ENCODE measurements at regions of chr15 and their contacts with region 1.

Region 1: GRCh38 chr15:90598031-90598577 is 68.4 kb downstream of the CRTC3 start:
- DNase-seq: peak; percentile 21 to 29
- ATAC-seq: peak; percentile 34 to 62 (median 58)
- H3K4me3 ChIP-seq: no peak overlapping the region
- H3K4me3 Mint-ChIP-seq: peak overlapping the region; percentile 77
- H3K27ac ChIP-seq: peak overlapping the region; percentile 82
- H3K27ac Mint-ChIP-seq: peak overlapping the region; percentile 93 to 97
- H3K4me1 ChIP-seq: peaks cover 42% of the 10 kb centered on the region
- H3K4me1 Mint-ChIP-seq: peaks cover 53 to 55% of the 10 kb centered on the region in 2 donors
- H3K27me3 ChIP-seq: no peaks in the 10 kb centered on the region
- H3K27me3 Mint-ChIP-seq: no peaks in the 10 kb centered on the region
- CTCF ChIP-seq: no peak

Region 2: GRCh38 chr15:90529371-90530249 is 68.5 kb before region 1 on chr15 and contains the start of gene CRTC3:
- intact Hi-C with region 1: loop called (anchors 5 kb)
- DNase-seq: peak; percentile 57 to 80
- ATAC-seq: peak; percentile 82 to 87 (median 82)
- H3K4me3 ChIP-seq: peak within 1 kb of the TSS; percentile 75
- H3K4me3 Mint-ChIP-seq: peak within 1 kb of the TSS; percentile 98
- H3K27ac ChIP-seq: peak within 1 kb of the TSS; percentile 75
- H3K27ac Mint-ChIP-seq: peak within 1 kb of the TSS; percentile 87 to 93
- H3K4me1 ChIP-seq: peaks cover 21% of the 10 kb centered on the region
- H3K4me1 Mint-ChIP-seq: peaks cover 41 to 46% of the 10 kb centered on the region in 2 donors
- H3K27me3 ChIP-seq: no peaks in the 10 kb centered on the region
- H3K27me3 Mint-ChIP-seq: no peaks in the 10 kb centered on the region
- CTCF ChIP-seq: no peak
- total RNA-seq, gene CRTC3: 68.8 to 101 (median 92.4) TPM

Region 3: DNA sequence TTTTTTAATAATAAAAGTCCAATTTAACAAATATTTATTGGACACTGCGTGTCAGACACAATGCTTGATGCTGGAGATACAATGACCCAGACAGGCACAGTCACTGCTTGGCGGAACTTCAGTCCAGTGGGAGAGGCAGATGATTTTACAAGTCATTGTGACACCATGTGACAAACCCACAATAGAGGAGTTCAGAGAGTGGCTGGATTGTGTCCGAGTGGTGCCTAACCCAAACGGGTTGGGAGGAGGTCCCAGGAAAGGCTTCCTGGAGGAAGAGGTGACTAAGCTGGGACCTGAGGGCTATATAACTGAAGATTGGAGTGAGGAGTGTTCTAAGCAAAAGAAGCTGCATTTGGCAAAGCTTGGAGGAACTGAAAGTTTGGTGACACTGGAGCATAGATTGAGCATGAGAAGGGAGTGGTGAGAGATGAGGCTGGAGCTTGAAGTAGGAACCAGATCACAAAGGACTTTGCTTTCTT is 27.0 kb before region 1 on chr15:
- intact Hi-C with region 1: loop called (anchors 1 kb)
- DNase-seq: no peak
- ATAC-seq: peak; percentile 28 to 67 (median 32)
- H3K4me3 ChIP-seq: no peak overlapping the region
- H3K4me3 Mint-ChIP-seq: peak overlapping the region; percentile 63
- H3K27ac ChIP-seq: peak overlapping the region; percentile 30
- H3K27ac Mint-ChIP-seq: peak overlapping the region; percentile 72 to 92
- H3K4me1 ChIP-seq: peaks cover 63% of the 10 kb centered on the region
- H3K4me1 Mint-ChIP-seq: peaks cover 68 to 75% of the 10 kb centered on the region in 2 donors
- H3K27me3 ChIP-seq: no peaks in the 10 kb centered on the region
- H3K27me3 Mint-ChIP-seq: no peaks in the 10 kb centered on the region
- CTCF ChIP-seq: no peak